Panc1 (cell line): ENCODE measurements at regions of chr15 and their contacts with region 1.

Region 1: DNA sequence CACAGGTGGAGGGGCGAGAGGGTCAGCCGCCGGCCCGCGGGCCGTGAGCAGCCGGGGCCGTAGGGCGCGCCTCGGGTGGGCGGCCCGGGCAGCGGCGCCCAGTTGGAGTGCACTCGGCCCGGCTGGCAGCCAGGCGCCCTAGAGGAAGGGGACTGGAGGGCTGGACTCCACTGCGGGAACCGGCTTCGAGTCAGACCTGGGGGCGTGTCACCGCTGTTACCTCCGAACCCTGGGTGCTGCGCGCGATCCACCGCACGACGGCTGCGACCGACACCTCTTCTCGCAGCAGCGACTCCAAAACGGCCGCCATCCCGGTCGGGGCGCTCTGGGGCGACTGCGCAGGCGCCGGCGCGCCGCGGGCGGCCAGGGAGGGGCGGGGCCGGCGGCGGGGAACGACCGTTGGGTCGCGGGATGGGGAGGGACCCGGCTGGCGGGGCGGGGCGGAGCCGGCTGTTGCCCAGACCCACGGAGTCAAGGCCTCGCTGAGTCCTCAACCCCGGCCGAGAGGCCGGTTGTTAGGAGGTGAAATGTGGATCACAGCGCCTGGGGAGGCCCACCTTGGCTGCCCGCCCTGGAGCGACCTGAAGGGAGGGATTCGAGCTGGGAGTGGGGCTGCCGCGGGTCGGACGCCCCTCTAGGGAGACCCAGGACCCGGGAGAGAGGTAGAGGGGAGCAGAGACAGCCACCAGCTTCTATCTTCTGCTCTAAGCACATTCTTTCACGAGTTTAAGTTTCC is at the start of gene CDAN1:
- DNase-seq: peak; percentile 41
- ATAC-seq: peak; percentile 96
- H3K4me3 ChIP-seq: peak within 1 kb of the TSS; percentile 77 to 78
- H3K27ac ChIP-seq: peak within 1 kb of the TSS; percentile 87
- H3K4me1 ChIP-seq: 0 out of 2 replicates have a peak, but pooled peaks cover 11% of the 10 kb centered on the region
- H3K27me3 ChIP-seq: no peaks in the 10 kb centered on the region
- CTCF ChIP-seq: no peak
- total RNA-seq, gene CDAN1: 41.1 TPM

Region 2: GRCh38 chr15:42716626-42717025 is 20.3 kb before region 1 on chr15:
- CTCF ChIA-PET with region 1: no interaction called
- POLR2A ChIA-PET with region 1: no interaction called
- in situ Hi-C with region 1: no loop called
- intact Hi-C with region 1: no loop called
- DNase-seq: no peak
- ATAC-seq: no peak
- H3K4me3 ChIP-seq: no peak overlapping the region
- H3K27ac ChIP-seq: no peak overlapping the region
- H3K4me1 ChIP-seq: no peaks in the 10 kb centered on the region
- H3K27me3 ChIP-seq: no peaks in the 10 kb centered on the region
- CTCF ChIP-seq: no peak

Region 3: DNA sequence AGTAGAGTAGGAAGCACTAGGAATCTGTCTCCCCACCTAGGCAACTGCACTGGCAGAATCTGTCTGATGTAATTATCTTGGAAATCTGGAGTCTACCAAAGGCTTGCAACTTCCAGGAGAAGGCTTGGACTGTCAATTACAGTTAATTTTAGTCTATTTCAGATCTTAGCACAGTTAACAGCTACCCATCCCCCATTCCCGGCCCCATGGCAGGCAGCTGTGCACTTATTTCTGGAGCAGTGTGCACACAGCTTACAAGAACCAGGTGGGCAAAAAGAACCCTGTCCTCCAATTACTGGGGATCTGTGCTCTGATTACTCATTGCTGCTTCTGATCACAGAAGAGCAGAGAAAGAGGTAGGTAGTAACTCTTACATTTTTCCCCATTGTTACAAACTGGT is 12.3 kb after region 1 on chr15:
- CTCF ChIA-PET with region 1: no interaction called
- POLR2A ChIA-PET with region 1: no interaction called
- in situ Hi-C with region 1: no loop called
- intact Hi-C with region 1: no loop called
- DNase-seq: no peak
- ATAC-seq: no peak
- H3K4me3 ChIP-seq: no peak overlapping the region
- H3K27ac ChIP-seq: no peak overlapping the region
- H3K4me1 ChIP-seq: no peaks in the 10 kb centered on the region
- H3K27me3 ChIP-seq: no peaks in the 10 kb centered on the region
- CTCF ChIP-seq: no peak

Region 4: DNA sequence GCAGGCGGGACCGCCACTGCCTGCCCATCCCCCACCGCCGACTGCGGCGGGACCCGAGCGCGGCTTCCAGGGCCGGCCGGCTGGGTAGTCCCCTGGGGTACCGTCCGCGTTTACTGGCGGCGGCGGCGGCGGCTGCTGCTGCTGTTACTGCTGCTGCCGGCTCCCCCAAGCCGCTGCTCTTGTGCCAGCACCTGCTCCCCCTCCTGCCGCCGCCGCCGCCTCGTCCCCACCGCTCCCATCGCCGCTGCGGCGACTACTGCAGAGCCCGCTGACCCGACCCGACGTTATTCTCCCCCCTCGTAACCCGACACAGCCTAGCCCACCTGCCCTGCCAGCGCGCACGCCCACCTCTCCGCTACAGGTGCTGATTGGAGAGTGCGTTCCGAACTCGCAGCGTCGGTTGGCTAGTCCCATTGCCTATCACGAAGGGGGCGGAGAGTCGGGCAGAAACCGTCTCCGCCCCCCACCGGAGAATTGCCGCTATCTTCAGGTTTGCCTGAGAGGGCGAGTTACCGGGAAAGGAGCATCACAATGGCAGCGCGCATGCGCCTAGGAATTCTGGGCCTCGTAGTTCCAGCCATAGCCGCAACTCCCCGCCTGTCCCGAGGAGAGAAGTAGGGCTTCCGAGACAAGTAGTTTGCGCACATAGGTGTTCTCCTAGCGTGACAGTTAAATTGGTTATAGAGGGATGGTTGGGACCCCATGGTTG is 183.7 kb after region 1 on chr15 and contains the start of gene TTBK2:
- CTCF ChIA-PET with region 1: interaction called, 11 read pairs
- POLR2A ChIA-PET with region 1: no interaction called
- in situ Hi-C with region 1: no loop called
- intact Hi-C with region 1: no loop called
- DNase-seq: peak; percentile 95
- ATAC-seq: peak; percentile 99
- H3K4me3 ChIP-seq: peak within 1 kb of the TSS; percentile 78 to 84
- H3K27ac ChIP-seq: peak within 1 kb of the TSS; percentile 76
- H3K4me1 ChIP-seq: peaks cover 6% of the 10 kb centered on the region; the same call in 1 of the 2 replicates
- H3K27me3 ChIP-seq: no peaks in the 10 kb centered on the region
- CTCF ChIP-seq: no peak
- total RNA-seq, gene TTBK2: 17.2 TPM